ENCODE measurements at regions of chr2 and their contacts with region 1.

Region 1: DNA sequence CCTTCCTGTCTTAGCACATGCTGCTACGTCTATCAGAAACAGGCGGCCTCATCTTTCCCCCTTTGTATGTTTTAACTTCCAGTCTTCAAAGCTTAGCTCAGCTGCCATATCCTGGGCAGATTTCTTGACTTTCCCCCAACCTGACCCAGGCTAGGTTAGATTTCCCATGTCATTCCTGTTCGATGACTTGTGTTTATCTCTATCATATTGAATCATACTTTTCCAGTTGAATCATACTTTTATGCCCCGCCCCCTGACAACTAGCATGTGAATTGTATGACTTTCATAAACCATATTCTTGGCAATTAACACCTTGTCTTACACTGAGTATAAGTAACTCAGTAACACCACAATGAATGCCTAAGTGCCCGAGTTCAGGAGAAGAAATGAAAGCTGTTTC is 128.3 kb downstream of the CYRIA start:
- DNase-seq: no peak
- H3K4me3 ChIP-seq: no peak overlapping the region
- H3K27ac ChIP-seq: no peak overlapping the region
- H3K4me1 ChIP-seq: no peaks in the 10 kb centered on the region
- H3K27me3 ChIP-seq: no peaks in the 10 kb centered on the region
- CTCF ChIP-seq: no peak
- EP300 ChIP-seq: no peak
- POLR2A ChIP-seq: no peak

Region 2: DNA sequence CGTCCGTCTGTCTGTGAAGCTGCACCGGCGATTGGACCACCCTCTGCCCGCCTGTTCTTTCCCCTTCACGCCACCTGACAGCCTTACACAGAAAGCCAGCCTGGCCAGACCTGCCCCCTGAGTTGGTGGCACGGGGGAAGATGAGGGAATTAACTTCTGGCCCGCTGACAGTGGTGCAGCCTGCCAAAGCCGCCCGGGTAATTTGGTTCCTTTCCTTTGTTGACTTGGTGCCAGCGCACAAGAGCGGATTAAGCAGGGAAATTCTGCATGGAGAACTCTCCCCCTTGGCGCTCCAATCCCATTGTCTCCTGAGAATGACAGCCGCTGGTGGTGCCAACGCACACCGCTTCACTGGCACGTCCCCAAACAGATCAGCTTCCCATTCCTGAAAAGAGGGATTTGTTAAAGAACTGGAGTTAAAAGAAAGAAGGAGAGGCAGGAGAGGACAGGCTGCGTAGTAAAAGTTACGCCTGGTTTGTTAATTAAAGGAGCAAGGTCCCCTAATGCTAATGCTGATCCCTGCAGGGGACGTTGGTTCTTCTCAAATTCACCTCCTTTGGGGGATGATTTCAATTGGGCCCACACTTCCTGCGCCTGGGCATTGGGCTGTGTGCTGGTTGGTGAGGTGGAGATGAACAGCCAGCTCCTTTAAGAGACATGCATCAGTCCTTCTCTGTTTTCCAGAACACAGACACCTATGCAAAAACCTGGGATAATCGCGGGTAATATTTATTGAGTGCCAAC is 310.3 kb before region 1 on chr2:
- intact Hi-C with region 1: no loop called
- DNase-seq: no peak
- H3K4me3 ChIP-seq: no peak overlapping the region
- H3K27ac ChIP-seq: no peak overlapping the region
- H3K4me1 ChIP-seq: no peaks in the 10 kb centered on the region
- H3K27me3 ChIP-seq: no peaks in the 10 kb centered on the region
- CTCF ChIP-seq: no peak
- EP300 ChIP-seq: no peak
- POLR2A ChIP-seq: no peak

Region 3: DNA sequence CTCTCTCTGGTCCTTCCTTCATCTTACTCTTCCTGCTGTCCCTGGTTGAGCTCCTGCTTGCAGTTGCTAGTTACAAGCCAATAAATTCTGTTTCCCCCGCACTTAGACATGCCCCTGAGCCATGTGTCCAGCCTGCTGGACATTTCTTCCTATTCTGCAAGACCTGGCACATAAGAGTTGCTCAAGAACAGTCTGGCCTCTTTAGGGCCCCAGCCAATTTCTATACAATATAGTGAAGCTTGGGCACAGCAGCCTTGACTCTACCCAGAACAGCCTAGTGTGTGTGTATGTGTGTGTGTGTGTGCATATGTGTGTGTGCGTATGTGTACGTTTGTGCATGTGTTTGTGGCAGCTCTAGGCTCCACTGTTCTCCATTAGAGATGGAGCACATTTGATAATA is 147.7 kb before region 1 on chr2:
- intact Hi-C with region 1: loop called in 1 of 4 experiments (anchors 1 kb)
- DNase-seq: no peak
- H3K4me3 ChIP-seq: no peak overlapping the region
- H3K27ac ChIP-seq: no peak overlapping the region
- H3K4me1 ChIP-seq: no peaks in the 10 kb centered on the region
- H3K27me3 ChIP-seq: no peaks in the 10 kb centered on the region
- CTCF ChIP-seq: no peak
- EP300 ChIP-seq: no peak
- POLR2A ChIP-seq: no peak